ENCODE measurements at regions of chr14 and their contacts with region 1.

Region 1: DNA sequence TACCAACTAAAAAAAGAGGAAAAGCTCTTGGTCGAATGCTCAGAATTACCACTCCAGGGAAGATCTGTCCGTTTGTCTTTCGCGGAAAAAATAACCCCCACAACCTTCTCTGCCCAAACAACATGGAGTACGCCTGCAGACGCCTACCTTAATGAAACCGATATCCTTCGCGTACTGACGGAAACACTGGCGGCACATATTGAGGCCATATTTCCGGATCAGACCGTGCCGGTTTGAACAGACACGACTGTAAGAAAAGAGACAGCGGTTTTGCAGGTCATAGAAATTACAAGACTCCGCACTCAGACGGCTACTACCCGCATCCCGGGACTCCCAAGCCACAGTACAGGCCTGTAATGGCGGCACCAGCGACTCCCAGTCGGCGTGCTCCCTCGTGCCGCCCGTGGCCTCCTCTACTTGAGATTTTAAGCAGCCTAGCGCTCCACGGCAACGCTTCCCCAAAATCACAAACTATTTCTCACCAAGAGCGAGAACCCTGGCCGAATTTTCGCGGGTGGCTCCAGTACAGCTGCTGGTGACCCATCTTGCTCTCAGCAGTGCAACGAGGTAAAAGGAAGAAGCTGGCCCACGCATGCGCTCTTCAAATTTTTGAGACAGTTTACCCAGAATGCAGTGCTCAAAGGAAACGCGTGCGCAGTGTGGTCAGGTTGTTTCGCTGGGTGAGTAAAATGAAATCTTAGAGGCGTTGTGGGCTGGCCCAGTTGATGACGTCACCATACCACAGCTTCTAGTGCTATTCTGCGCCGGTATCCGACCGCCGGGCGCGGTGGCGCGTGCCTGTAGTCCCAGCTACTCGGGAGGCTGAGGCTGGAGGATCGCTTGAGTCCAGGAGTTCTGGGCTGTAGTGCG is at the start of gene RPS29:
- DNase-seq: peak; percentile 99 to 100 (median 99)
- H3K4me3 ChIP-seq: peak within 1 kb of the TSS; percentile 87 to 100 (median 98)
- H3K27ac ChIP-seq: peak within 1 kb of the TSS; percentile 96 to 98
- H3K4me1 ChIP-seq: peaks cover 13 to 25% (median 16%) of the 10 kb centered on the region in 4 experiments
- H3K27me3 ChIP-seq: no peaks in the 10 kb centered on the region

Region 2: DNA sequence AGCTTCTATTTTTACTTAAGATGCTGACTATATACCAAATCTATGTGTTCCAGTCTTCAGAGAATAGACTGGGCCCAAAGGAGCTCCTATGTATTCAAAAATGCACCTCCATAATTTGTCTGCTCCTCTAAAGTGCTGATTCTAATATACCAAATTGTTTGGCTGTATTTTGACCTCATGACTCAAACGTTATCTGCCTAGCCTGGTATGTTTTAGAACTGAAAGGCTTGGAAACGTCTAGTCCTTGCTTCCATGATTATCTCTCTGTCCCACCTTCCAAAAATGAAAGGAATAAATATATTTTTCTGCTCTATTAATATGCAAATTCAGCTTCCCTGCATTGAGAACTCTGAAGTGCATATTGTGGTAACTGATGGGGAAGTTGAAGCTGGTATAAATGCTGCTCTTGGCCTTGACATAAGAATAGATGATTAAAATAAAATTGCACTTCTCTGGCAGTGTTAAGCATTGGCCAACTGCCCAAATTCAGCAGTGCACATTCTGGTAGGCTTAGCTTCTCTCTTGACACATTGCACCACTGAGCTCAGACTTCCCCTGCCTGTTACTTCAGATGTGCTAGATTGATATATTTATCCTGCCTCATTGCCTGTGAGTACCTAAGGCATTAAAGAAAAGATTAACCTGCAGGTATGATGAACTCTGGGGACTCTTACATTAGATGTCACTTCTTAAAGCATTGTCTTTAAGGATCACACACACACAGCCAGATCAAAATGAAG is 882.1 kb before region 1 on chr14:
- CTCF ChIA-PET with region 1: no interaction called
- POLR2A ChIA-PET with region 1: no interaction called
- DNase-seq: no peak
- H3K4me3 ChIP-seq: no peak overlapping the region
- H3K27ac ChIP-seq: no peak overlapping the region
- H3K4me1 ChIP-seq: no peaks in the 10 kb centered on the region
- H3K27me3 ChIP-seq: no peaks in the 10 kb centered on the region

Region 3: GRCh38 chr14:49438256-49438770 is 147.7 kb before region 1 on chr14:
- CTCF ChIA-PET with region 1: no interaction called
- POLR2A ChIA-PET with region 1: no interaction called
- DNase-seq: no peak
- H3K4me3 ChIP-seq: no peak overlapping the region
- H3K27ac ChIP-seq: no peak overlapping the region
- H3K4me1 ChIP-seq: no peaks in the 10 kb centered on the region
- H3K27me3 ChIP-seq: no peaks in the 10 kb centered on the region

Region 4: GRCh38 chr14:49598485-49599300 is 12.7 kb after region 1 on chr14 and contains the start of gene LRR1:
- CTCF ChIA-PET with region 1: interaction called, 20 read pairs
- POLR2A ChIA-PET with region 1: interaction called, 9 read pairs
- DNase-seq: peak; percentile 80 to 91 (median 87)
- H3K4me3 ChIP-seq: peak within 1 kb of the TSS; percentile 88 to 98 (median 95)
- H3K27ac ChIP-seq: peak within 1 kb of the TSS; percentile 97 to 99
- H3K4me1 ChIP-seq: peaks cover 18 to 48% (median 32%) of the 10 kb centered on the region in 4 experiments
- H3K27me3 ChIP-seq: no peaks in the 10 kb centered on the region